ENCODE measurements at regions of chr1 and their contacts with region 1.

Region 1: DNA sequence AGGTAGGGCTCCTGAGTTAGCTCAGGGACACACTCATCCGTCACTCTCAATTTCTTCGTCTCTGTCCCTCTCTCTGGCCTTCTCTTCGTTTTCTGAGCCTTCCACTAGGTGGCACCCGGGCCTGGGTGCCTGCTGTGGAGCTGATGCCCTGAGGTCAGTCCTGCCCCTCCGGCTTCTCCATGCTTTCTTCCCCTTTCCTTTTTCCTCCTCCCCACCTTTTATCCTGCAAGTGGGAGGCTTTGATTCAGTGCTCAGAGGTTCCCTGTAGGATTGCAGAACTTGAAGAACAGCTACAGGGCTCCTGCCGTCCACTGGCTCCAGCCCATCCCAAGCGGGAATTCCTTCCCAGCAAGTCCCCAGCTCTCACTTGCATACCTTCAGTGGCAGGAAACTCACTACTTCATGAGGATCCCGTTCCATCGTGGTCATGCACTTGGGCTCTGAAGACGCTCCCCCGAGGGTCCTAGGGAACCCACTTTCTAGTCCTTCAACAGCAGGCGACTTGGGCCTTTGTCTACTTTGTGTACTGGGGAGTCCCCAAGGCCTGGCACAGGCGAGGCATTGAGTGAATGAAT is 45.6 kb downstream of the SRRM1 start:
- DNase-seq: peak; percentile 61 to 93 (median 83)

Region 2: GRCh38 chr1:24409535-24409934 is 279.2 kb before region 1 on chr1:
- intact Hi-C with region 1: no loop called
- DNase-seq: peak in 1 of 42 donors; percentile 26

Region 3: GRCh38 chr1:24830680-24831272 is 142.1 kb after region 1 on chr1:
- intact Hi-C with region 1: loop called (anchors 5 kb)
- DNase-seq: peak in 1 of 42 donors; percentile 51

Measured in head of caudate nucleus (tissue), 42 donors.